ENCODE measurements at regions of chr4 and their contacts with region 1.

Region 1: GRCh38 chr4:165124463-165124862 is 11.8 kb upstream of the TMEM192 start:
- DNase-seq: no peak
- ATAC-seq: no peak
- H3K4me3 ChIP-seq: no peak overlapping the region
- H3K27ac ChIP-seq: no peak overlapping the region
- H3K4me1 ChIP-seq: no peaks in the 10 kb centered on the region
- H3K27me3 ChIP-seq: no peaks in the 10 kb centered on the region
- CTCF ChIP-seq: no peak
- POLR2A ChIP-seq: no peak

Region 2: GRCh38 chr4:164876700-164877324 is 247.7 kb before region 1 on chr4 and contains the start of gene APELA:
- in situ Hi-C with region 1: no loop called
- intact Hi-C with region 1: no loop called
- DNase-seq: no peak
- ATAC-seq: no peak
- H3K4me3 ChIP-seq: no peak within 1 kb of the TSS
- H3K27ac ChIP-seq: no peak within 1 kb of the TSS
- H3K4me1 ChIP-seq: no peaks in the 10 kb centered on the region
- H3K27me3 ChIP-seq: no peaks in the 10 kb centered on the region
- CTCF ChIP-seq: no peak
- POLR2A ChIP-seq: no peak
- total RNA-seq, gene APELA: not detected

Region 3: GRCh38 chr4:165312506-165312905 is 188.0 kb after region 1 on chr4:
- in situ Hi-C with region 1: loop called in 1 of 4 experiments (anchors 10 kb)
- intact Hi-C with region 1: no loop called
- DNase-seq: no peak
- ATAC-seq: no peak
- H3K4me3 ChIP-seq: no peak overlapping the region
- H3K27ac ChIP-seq: no peak overlapping the region
- H3K4me1 ChIP-seq: no peaks in the 10 kb centered on the region
- H3K27me3 ChIP-seq: no peaks in the 10 kb centered on the region
- CTCF ChIP-seq: no peak
- POLR2A ChIP-seq: no peak